Activated CD4-positive, alpha-beta memory T cell treated with anti-CD3 and anti-CD28 coated beads, Interleukin-2, amount 10 ng/mL, durations not matched to agents 7 days and 5 days (primary cell): ENCODE measurements at regions of chr15 and their contacts with region 1.

Region 1: DNA sequence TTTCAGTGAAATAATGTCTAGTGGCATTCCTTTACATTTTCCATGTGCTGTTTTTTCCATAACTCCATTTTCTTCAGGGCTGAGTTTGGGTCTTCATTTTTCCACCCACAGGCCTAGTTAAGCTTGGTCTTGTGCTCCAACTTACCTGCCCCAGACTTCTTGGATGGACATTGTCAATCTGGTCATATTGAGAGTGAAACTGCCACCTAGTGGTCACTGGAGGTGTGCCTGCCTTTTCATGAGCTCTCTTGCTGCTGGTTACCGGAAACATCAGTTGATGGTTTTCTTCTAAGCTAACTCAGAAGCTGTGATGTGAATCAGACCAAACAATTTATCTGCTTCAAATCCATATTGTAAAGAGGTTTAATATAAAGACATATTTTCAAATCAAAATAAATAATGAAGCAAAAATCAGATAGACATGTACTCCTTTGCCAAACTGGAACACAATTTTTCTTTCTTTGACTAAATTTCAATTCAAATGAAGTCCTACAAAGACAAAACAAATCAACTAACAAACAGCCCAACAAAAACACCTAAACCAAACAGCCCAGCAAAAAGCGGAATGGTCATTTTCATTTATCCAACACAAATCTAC is 135.1 kb upstream of the RASGRP1 start:
- DNase-seq: peak; percentile 83
- H3K4me3 Mint-ChIP-seq: peak overlapping the region; percentile 93
- H3K27ac Mint-ChIP-seq: peak overlapping the region; percentile 97
- H3K4me1 Mint-ChIP-seq: peaks cover 80% of the 10 kb centered on the region
- H3K27me3 Mint-ChIP-seq: no peaks in the 10 kb centered on the region

Region 2: DNA sequence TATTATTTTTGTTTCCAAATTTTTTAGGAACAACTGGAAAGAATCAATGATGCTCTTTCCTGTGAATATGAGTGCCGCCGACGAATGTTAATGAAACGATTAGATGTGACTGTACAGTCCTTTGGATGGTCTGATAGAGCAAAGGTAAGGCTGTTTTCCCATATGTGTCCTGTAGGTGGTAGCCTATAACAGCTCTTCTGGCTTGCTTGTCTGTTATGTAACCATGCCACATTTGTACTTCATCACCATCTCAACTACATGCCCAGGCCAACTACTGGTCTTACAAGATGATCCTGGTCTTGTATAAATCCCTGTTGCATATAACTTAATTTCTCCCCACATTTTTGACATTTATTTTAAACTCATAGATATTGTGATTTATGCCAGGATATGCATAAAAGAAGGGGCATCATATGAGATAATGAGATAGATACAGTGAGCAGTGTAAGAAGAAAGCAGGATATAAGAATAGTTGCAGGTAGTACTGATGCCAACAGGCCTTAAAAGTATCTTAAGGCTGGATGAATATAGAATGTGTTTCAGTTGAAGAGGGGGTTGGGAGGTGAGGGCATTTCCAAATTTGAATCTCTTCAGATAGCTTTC is 225.5 kb before region 1 on chr15:
- CTCF ChIA-PET with region 1: interaction called, 79 read pairs
- POLR2A ChIA-PET with region 1: interaction called, 56 read pairs
- DNase-seq: peak; percentile 40
- H3K4me3 Mint-ChIP-seq: no peak overlapping the region
- H3K27ac Mint-ChIP-seq: peak overlapping the region; percentile 32
- H3K4me1 Mint-ChIP-seq: peaks cover 4% of the 10 kb centered on the region
- H3K27me3 Mint-ChIP-seq: no peaks in the 10 kb centered on the region

Region 3: DNA sequence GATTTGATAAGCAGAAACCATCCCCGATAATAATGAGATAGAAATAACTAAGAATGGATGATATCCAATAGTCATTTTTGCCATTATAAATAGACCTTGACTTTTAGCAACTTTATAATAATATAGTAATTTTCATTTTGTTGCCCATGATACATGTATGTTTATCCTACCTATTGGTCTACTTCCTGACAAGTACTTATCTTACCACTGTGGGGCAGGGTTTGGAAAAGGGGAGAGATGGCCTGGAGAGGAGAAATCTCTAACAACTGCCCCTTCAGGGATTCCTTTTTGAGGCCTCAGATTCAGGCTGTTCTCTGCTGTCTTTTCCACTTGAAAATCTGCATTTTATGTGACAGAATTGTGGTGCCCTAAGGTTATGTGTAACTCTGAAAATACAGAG is 203.6 kb before region 1 on chr15:
- CTCF ChIA-PET with region 1: interaction called, 6 read pairs
- POLR2A ChIA-PET with region 1: interaction called, 14 read pairs
- DNase-seq: no peak
- H3K4me3 Mint-ChIP-seq: no peak overlapping the region
- H3K27ac Mint-ChIP-seq: no peak overlapping the region
- H3K4me1 Mint-ChIP-seq: peaks cover 28% of the 10 kb centered on the region
- H3K27me3 Mint-ChIP-seq: no peaks in the 10 kb centered on the region

Region 4: DNA sequence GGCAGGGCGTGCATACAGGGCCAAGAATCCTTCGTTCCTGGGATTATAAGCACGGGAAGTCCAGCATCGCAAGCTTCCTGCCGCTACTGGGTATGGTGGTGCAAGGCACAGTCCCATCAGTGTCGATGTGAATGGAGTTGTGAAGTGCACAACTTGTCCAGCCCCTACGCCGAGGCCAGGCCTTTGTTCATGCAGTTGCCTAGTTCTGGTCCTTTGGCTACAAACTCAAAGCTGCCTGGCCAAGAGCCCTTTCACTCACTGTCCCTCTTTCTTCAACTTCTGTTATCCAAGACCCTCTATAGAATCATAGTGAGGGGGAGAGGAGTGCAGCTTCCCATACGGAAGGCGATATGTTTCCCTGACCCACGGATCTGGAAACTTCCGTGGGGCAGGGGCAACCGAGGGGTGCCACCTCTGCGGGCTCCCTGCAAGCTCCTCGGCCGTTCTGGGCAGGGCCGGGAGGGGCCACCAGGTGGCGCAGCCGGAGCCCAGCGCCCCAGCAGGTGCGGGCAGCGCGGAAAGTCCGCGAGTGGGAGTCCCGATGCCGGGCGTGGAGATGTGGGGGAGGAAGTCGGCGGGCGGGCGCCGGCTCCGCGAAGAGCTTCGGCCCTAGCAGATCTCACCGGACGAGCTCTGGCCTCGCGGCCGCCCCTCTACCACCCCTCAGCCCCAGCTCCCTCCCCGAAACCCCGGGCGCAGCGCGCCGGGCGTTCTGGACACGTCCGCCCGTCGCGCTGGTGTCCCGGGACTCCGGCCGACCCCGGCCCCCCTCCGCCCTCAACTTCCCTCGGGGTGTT is 135.8 kb before region 1 on chr15:
- CTCF ChIA-PET with region 1: interaction called, 731 read pairs
- POLR2A ChIA-PET with region 1: interaction called, 1,063 read pairs
- DNase-seq: peak; percentile 89
- H3K4me3 Mint-ChIP-seq: peak overlapping the region; percentile 92
- H3K27ac Mint-ChIP-seq: peak overlapping the region; percentile 92
- H3K4me1 Mint-ChIP-seq: peaks cover 52% of the 10 kb centered on the region
- H3K27me3 Mint-ChIP-seq: no peaks in the 10 kb centered on the region

Region 5: GRCh38 chr15:38647683-38648082 is 52.0 kb before region 1 on chr15:
- CTCF ChIA-PET with region 1: interaction called, 63 read pairs
- POLR2A ChIA-PET with region 1: interaction called, 104 read pairs
- DNase-seq: no peak
- H3K4me3 Mint-ChIP-seq: no peak overlapping the region
- H3K27ac Mint-ChIP-seq: no peak overlapping the region
- H3K4me1 Mint-ChIP-seq: peaks cover 63% of the 10 kb centered on the region
- H3K27me3 Mint-ChIP-seq: no peaks in the 10 kb centered on the region